Breast epithelium (tissue), 4 donors: ENCODE measurements at regions of chr12 and their contacts with region 1.

Region 1: DNA sequence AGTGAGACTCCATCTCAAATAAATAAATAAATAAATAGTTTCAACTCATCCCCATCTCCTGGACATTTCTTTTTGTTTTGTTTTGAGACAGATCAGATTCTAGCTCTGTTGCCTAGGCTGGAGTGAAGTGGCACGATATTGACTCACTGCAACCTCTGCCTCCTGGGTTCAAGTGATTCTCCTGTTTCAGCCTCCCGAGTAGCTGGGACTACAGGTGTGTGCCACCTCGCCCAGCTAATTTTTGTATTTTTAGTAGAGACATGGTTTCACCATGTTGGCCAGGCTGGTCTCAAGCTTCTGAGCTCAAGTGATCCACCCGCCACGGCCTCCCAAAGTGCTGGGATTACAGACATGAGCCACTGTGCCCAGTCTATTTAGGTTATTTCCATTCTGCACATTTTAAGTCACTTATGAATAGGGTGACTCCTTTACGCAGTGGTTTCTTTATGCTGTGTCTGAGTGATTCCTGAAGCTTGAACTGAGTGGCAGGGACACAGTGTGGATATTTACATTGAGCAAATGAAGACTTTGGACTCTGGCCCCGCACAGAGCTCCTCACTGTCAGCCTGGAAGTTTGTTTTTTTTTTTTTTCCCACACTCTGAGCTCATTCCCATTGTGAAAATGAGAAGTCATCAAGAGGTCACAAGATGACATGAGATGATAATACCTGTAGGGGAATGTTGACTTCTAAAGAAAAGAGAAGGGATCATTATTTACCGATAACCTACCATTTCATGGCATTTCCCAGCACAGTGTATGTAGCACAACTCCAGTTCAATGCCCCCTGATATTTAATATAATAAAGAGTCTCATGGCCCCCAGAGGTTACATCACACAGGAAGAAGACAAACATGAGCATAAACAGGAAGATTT is 72.6 kb downstream of the TBX3 start:
- DNase-seq: no peak
- H3K4me3 ChIP-seq: no peak overlapping the region
- H3K27ac ChIP-seq: no peak overlapping the region
- H3K4me1 ChIP-seq: no peaks in the 10 kb centered on the region
- H3K27me3 ChIP-seq: no peaks in the 10 kb centered on the region
- CTCF ChIP-seq: no peak
- POLR2A ChIP-seq: no peak

Region 2: GRCh38 chr12:114529966-114530365 is 81.4 kb before region 1 on chr12:
- intact Hi-C with region 1: loop called (anchors 2 kb)
- DNase-seq: no peak
- H3K4me3 ChIP-seq: no peak overlapping the region
- H3K27ac ChIP-seq: no peak overlapping the region
- H3K4me1 ChIP-seq: no peaks in the 10 kb centered on the region
- H3K27me3 ChIP-seq: no peaks in the 10 kb centered on the region
- CTCF ChIP-seq: no peak
- POLR2A ChIP-seq: no peak

Region 3: GRCh38 chr12:114580306-114580705 is 31.1 kb before region 1 on chr12:
- intact Hi-C with region 1: no loop called
- DNase-seq: no peak
- H3K4me3 ChIP-seq: no peak overlapping the region
- H3K27ac ChIP-seq: no peak overlapping the region
- H3K4me1 ChIP-seq: no peaks in the 10 kb centered on the region
- H3K27me3 ChIP-seq: peaks cover 0 to 4% of the 10 kb centered on the region in 2 donors
- CTCF ChIP-seq: no peak
- POLR2A ChIP-seq: no peak